ENCODE measurements at regions of chr17 and their contacts with region 1.

Region 1: DNA sequence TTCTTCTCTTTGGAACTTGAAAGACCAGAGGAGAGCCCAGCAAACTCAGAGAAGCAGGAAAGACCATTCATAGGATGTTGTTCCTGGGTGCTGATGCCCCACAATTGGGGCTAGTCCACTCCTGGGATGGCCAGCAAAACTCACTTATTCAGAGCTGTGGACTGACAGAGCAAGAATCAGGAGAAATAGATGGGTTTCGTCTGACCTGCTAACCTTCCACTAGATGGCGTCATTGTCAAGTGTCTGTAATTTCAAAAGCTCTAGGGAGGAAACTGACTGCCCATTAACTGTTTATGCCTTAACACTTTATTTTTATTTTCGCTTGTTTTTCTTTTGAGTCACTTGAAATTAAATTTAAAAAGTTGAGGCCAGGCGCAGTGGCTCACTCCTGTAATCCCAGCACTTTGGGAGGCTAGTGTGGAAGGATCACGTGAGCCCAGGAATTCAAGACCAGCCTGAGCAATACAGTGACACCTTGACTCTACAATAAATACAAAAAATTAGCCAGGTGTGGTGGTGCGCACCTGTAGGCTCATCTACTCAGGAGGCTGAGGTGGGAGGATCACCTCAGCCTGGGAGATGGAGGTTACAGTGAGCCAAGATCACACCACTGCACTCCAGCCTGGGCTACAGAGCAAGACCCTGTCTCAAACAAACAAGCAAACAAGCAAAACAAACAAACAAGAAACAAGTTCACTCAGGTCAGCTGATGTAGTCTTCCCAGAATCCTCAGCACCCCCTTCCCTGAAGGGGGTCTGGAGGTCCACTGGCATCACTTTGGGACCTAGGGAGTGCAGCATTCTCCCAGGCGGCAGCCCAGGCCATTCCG is 28.6 kb upstream of the MILR1 start:
- DNase-seq: peak; percentile 81
- ATAC-seq: peak; percentile 86
- H3K4me3 ChIP-seq: no peak overlapping the region
- H3K27ac ChIP-seq: no peak overlapping the region
- H3K4me1 ChIP-seq: peaks cover 3 to 18% of the 10 kb centered on the region in 2 experiments; a peak in 2 of 4 replicates
- H3K27me3 ChIP-seq: no peaks in the 10 kb centered on the region
- CTCF ChIP-seq: peak; percentile 85 to 95 (median 92)
- POLR2A ChIP-seq: no peak
- RAD21 ChIP-seq: peak; percentile 99

Region 2: DNA sequence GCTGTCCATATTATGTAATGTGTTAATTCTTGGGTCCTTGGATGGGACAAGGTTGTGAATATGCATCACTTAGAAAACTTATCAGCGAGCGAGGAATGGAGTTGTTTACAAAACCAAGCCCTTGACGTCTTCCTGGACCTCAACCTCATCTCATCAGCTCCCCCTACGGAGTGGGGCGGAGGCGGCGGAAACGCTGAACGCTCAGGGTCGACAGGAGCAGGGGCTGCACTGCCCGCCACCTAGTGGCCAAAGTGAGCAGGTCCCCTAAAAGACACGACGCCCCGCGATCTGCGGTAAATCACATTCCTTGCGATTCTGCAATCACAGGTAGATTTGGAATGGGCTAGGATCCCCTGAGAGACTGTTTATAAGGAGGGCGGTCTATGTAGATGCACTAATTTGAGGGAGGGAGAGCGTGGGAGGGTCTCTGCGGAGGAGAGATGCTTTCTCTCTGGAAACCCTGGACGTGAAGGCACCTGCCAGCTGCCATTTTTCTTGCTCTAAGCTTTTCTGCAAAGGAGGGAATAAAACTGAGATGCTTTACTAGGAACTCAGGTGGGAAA is 394.5 kb before region 1 on chr17:
- CTCF ChIA-PET with region 1: interaction called, 9 read pairs
- POLR2A ChIA-PET with region 1: no interaction called
- RAD21 ChIA-PET with region 1: no interaction called
- intact Hi-C with region 1: loop called (anchors 10 kb)
- DNase-seq: peak; percentile 84
- ATAC-seq: peak; percentile 97
- H3K4me3 ChIP-seq: peak overlapping the region; percentile 45 to 50
- H3K27ac ChIP-seq: no peak overlapping the region
- H3K4me1 ChIP-seq: peaks cover 3 to 11% of the 10 kb centered on the region in 2 experiments; a peak in 3 of 4 replicates
- H3K27me3 ChIP-seq: no peaks in the 10 kb centered on the region
- CTCF ChIP-seq: peak; percentile 99 to 100 (median 100)
- POLR2A ChIP-seq: peak; percentile 63
- RAD21 ChIP-seq: peak; percentile 88

Region 3: DNA sequence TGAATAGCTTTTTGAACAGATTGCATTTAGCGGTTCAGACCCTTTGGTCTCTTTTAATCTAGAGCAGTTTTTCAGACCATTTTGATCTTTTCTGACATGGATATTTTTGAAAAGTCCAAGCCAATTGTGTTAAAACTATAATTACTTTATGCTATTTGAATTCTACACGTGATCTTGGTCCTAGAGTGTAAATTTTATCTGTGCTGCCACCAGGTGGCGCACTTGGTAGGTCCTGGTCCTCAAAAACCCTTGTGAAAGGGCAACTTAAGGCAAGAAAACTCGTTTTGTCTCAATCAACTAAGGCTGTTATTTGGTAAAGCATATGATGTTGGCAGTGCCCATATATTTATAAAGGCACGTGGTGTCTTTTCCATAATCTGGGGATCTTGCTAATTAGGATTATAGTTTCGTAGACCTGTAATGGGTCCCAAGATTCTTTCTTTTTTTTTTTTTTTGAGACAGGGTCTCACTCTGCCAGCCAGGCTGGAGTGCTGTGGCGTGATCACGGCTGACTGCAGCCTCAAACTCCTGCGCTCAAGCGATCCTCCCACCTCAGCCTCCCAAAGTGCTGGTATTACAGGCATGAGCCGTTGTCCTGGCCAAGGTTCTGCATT is 113.4 kb before region 1 on chr17:
- CTCF ChIA-PET with region 1: interaction called, 120 read pairs
- POLR2A ChIA-PET with region 1: interaction called, 6 read pairs
- RAD21 ChIA-PET with region 1: interaction called in 1 of 2 experiments, 4 read pairs
- intact Hi-C with region 1: loop called (anchors 1 kb)
- DNase-seq: peak; percentile 70
- ATAC-seq: peak; percentile 83
- H3K4me3 ChIP-seq: no peak overlapping the region
- H3K27ac ChIP-seq: no peak overlapping the region
- H3K4me1 ChIP-seq: peaks cover 7 to 13% of the 10 kb centered on the region in 2 experiments
- H3K27me3 ChIP-seq: no peaks in the 10 kb centered on the region
- CTCF ChIP-seq: peak; percentile 90 to 99 (median 91)
- POLR2A ChIP-seq: no peak
- RAD21 ChIP-seq: peak; percentile 80

Region 4: GRCh38 chr17:64491034-64491859 is 70.9 kb after region 1 on chr17:
- CTCF ChIA-PET with region 1: interaction called, 168 read pairs
- POLR2A ChIA-PET with region 1: interaction called, 6 read pairs
- RAD21 ChIA-PET with region 1: interaction called, 14 to 19 read pairs
- intact Hi-C with region 1: loop called (anchors 1 kb)
- DNase-seq: no peak
- ATAC-seq: peak; percentile 93
- H3K4me3 ChIP-seq: no peak overlapping the region
- H3K27ac ChIP-seq: no peak overlapping the region
- H3K4me1 ChIP-seq: peaks cover 4 to 8% of the 10 kb centered on the region in 2 experiments; a peak in 2 of 4 replicates
- H3K27me3 ChIP-seq: no peaks in the 10 kb centered on the region
- CTCF ChIP-seq: peak; percentile 75 to 87 (median 78); a peak in 5 of 6 replicates
- POLR2A ChIP-seq: no peak
- RAD21 ChIP-seq: peak; percentile 88

Region 5: DNA sequence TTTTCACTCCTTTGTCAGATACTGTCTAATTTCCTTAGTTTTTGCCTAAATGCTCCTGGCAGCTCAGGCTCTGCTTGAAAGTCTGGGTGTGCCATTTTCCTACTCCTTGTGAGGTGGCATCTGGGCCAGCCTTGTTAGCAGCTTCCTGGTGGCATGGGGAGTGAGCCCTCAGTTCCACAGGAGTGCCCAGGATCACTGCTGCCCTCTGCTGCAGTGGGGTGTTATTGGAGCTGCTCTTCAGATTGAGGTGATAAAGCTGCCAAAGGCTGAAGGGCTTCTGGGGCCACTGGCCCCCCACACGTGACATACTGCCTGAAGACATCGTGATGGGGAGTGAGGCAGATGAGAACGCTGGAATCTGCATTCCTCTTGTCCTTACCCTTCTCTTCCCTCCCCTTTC is 113.8 kb after region 1 on chr17:
- CTCF ChIA-PET with region 1: interaction called, 34 read pairs
- POLR2A ChIA-PET with region 1: no interaction called
- RAD21 ChIA-PET with region 1: interaction called, 3 to 4 read pairs
- intact Hi-C with region 1: no loop called
- DNase-seq: no peak
- ATAC-seq: peak; percentile 73
- H3K4me3 ChIP-seq: no peak overlapping the region
- H3K27ac ChIP-seq: no peak overlapping the region
- H3K4me1 ChIP-seq: no peaks in the 10 kb centered on the region
- H3K27me3 ChIP-seq: no peaks in the 10 kb centered on the region
- CTCF ChIP-seq: peak in 2 of 3 experiments; percentile 41 to 59; a peak in 4 of 6 replicates
- POLR2A ChIP-seq: no peak
- RAD21 ChIP-seq: peak; percentile 34; the same call in 1 of the 2 replicates

Region 6: GRCh38 chr17:64658931-64659330 is 238.6 kb after region 1 on chr17:
- CTCF ChIA-PET with region 1: no interaction called
- POLR2A ChIA-PET with region 1: no interaction called
- RAD21 ChIA-PET with region 1: no interaction called
- intact Hi-C with region 1: no loop called
- DNase-seq: no peak
- ATAC-seq: no peak
- H3K4me3 ChIP-seq: no peak overlapping the region
- H3K27ac ChIP-seq: peak overlapping the region; percentile 96; the same call in 1 of the 2 replicates
- H3K4me1 ChIP-seq: peaks cover 56 to 81% of the 10 kb centered on the region in 2 experiments
- H3K27me3 ChIP-seq: no peaks in the 10 kb centered on the region
- CTCF ChIP-seq: no peak
- POLR2A ChIP-seq: no peak
- RAD21 ChIP-seq: no peak

Region 7: DNA sequence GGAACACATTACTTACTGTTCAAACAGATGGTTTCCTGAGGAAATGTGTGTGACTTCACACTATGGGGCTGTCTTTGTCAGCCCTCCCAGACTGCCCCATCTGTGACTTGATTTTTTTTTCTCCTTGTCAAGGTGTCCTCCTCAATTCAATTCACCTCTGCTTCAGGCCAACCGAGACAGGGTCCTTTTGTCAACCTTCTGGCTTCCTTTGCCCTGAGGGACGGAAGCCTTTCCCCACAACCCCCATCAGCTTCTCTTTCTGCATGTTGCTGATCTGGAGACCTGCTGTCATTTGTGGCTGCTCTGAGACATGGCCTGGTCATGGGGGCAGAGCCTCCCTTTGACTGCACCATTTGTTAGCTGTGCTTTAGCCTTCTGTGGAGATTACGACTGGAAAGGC is 695.5 kb after region 1 on chr17:
- CTCF ChIA-PET with region 1: no interaction called
- POLR2A ChIA-PET with region 1: no interaction called
- RAD21 ChIA-PET with region 1: no interaction called
- intact Hi-C with region 1: no loop called
- DNase-seq: no peak
- ATAC-seq: no peak
- H3K4me3 ChIP-seq: no peak overlapping the region
- H3K27ac ChIP-seq: no peak overlapping the region
- H3K4me1 ChIP-seq: no peaks in the 10 kb centered on the region
- H3K27me3 ChIP-seq: 0 out of 2 replicates have a peak, but pooled peaks cover 3% of the 10 kb centered on the region
- CTCF ChIP-seq: no peak
- POLR2A ChIP-seq: no peak
- RAD21 ChIP-seq: no peak